ENCODE measurements at regions of chr15 and their contacts with region 1.

Region 1: GRCh38 chr15:36883713-36884517 is 216.4 kb downstream of the MEIS2 start:
- DNase-seq: peak; percentile 82
- H3K4me3 ChIP-seq: peak overlapping the region; percentile 63
- H3K27ac ChIP-seq: no peak overlapping the region
- H3K4me1 ChIP-seq: peaks cover 29% of the 10 kb centered on the region
- H3K27me3 ChIP-seq: peaks cover 88% of the 10 kb centered on the region
- CTCF ChIP-seq: peak; percentile 89

Region 2: GRCh38 chr15:36988947-36989346 is 105.0 kb after region 1 on chr15:
- intact Hi-C with region 1: no loop called
- DNase-seq: no peak
- H3K4me3 ChIP-seq: no peak overlapping the region
- H3K27ac ChIP-seq: peak overlapping the region; percentile 39
- H3K4me1 ChIP-seq: peaks cover 39% of the 10 kb centered on the region
- H3K27me3 ChIP-seq: no peaks in the 10 kb centered on the region
- CTCF ChIP-seq: no peak

Region 3: DNA sequence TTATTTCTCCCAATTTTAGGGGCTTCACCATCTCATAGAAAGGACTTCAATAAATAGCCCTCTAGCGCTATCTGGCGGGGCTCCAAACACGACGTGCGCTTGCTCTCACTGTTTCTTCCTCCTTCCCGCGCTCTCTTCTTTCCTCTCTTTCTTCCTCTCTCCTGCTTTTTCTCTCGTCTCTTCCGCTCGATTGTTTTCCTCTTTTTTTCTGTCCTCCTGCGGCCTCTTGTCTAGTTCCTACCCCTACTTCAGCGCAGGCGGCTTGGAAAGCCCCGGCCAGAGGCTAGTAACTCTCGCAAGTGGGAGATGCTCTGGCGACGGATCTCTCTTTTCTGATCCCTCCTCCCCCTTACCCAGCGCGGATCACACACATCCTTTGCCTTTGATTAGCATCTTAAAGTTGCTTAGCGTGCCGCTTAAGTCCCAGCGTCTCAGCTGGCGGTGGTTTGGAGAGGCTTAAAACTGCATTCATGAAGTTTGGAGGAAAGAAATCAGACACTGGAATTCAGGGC is 222.6 kb after region 1 on chr15:
- intact Hi-C with region 1: loop called (anchors 5 kb)
- DNase-seq: peak; percentile 68
- H3K4me3 ChIP-seq: peak overlapping the region; percentile 53
- H3K27ac ChIP-seq: peak overlapping the region; percentile 97
- H3K4me1 ChIP-seq: peaks cover 53% of the 10 kb centered on the region
- H3K27me3 ChIP-seq: peaks cover 76% of the 10 kb centered on the region
- CTCF ChIP-seq: peak; percentile 38

Region 4: GRCh38 chr15:37134699-37135131 is 250.8 kb after region 1 on chr15:
- intact Hi-C with region 1: loop called (anchors 10 kb)
- DNase-seq: no peak
- H3K4me3 ChIP-seq: no peak overlapping the region
- H3K27ac ChIP-seq: no peak overlapping the region
- H3K4me1 ChIP-seq: peaks cover 14% of the 10 kb centered on the region
- H3K27me3 ChIP-seq: no peaks in the 10 kb centered on the region
- CTCF ChIP-seq: peak; percentile 76